ENCODE measurements at regions of chr15 and their contacts with region 1.

Region 1: DNA sequence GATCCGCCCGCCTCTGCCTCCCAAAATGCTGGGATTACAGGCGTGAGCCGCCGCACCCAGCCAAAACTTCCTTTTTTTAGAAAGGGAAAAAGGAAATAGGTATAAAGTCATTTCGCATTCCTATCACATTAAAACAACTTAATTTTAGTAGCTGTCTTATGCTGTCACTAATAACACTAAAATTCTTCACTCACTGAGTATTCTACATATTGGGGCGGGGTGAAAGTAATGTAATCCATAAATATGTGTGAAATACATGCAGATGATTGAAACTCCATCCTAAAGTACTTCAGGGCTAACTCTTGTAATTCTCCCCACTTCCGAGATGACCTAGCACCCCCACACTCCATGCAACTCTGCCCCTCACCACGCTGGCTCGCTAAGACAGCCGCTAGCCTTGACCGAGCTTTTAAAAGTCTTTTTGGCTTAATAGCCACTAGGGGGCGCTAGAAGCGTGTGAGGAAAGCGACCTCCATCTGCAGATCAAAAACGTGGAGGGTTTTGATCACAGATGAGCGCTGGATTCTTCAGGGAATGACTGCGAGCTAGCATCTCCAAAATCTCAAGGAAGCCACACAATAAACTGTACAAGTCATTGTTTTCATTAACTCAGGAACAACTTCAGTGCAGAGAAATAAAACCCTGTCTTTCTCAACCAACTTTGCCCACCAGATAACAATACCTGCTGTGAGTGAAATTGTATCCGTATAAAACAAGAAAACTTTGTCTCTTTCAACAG is 129.3 kb upstream of the IGF1R start:
- DNase-seq: peak; percentile 59
- H3K4me3 Mint-ChIP-seq: no peak overlapping the region
- H3K27ac Mint-ChIP-seq: no peak overlapping the region
- H3K4me1 Mint-ChIP-seq: peaks cover 6% of the 10 kb centered on the region
- H3K27me3 Mint-ChIP-seq: peaks cover 18% of the 10 kb centered on the region

Region 2: GRCh38 chr15:98321896-98322295 is 197.1 kb before region 1 on chr15:
- CTCF ChIA-PET with region 1: no interaction called
- DNase-seq: no peak
- H3K4me3 Mint-ChIP-seq: no peak overlapping the region
- H3K27ac Mint-ChIP-seq: no peak overlapping the region
- H3K4me1 Mint-ChIP-seq: no peaks in the 10 kb centered on the region
- H3K27me3 Mint-ChIP-seq: no peaks in the 10 kb centered on the region

Region 3: DNA sequence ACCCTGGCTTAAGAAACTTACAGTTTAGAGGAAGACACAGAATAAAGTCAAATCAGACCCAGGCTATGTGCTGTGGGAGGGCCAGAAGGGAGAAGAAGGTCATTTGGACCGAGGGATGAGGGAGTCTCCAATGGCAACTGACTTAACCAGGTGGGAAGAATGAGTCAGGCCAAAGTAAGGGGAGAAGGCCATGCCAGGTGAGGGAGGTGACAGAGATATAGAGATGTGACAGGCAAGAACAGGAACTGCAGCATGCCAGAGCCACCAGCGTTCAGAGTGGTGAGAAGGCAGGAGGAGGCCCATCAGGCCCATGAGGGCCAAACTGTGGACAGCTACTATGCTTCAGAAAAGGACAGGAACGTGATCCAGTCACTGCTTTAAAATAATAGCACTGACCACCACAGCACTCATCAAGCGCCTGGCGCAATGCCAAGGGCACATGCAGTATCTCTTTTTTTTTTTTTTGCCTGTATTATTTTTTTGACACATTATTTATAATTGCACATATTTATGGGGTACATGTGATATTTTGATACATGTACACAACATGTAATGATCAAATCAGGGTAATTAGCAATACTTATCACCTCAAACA is 25.0 kb before region 1 on chr15:
- CTCF ChIA-PET with region 1: no interaction called
- DNase-seq: no peak
- H3K4me3 Mint-ChIP-seq: no peak overlapping the region
- H3K27ac Mint-ChIP-seq: no peak overlapping the region
- H3K4me1 Mint-ChIP-seq: no peaks in the 10 kb centered on the region
- H3K27me3 Mint-ChIP-seq: no peaks in the 10 kb centered on the region

Region 4: GRCh38 chr15:98647774-98648653 is 129.0 kb after region 1 on chr15 and contains the start of gene IGF1R:
- CTCF ChIA-PET with region 1: interaction called, 64 read pairs
- DNase-seq: peak; percentile 87
- H3K4me3 Mint-ChIP-seq: peak within 1 kb of the TSS; percentile 85
- H3K27ac Mint-ChIP-seq: peak within 1 kb of the TSS; percentile 94
- H3K4me1 Mint-ChIP-seq: peaks cover 32% of the 10 kb centered on the region
- H3K27me3 Mint-ChIP-seq: peaks cover 40% of the 10 kb centered on the region

Region 5: DNA sequence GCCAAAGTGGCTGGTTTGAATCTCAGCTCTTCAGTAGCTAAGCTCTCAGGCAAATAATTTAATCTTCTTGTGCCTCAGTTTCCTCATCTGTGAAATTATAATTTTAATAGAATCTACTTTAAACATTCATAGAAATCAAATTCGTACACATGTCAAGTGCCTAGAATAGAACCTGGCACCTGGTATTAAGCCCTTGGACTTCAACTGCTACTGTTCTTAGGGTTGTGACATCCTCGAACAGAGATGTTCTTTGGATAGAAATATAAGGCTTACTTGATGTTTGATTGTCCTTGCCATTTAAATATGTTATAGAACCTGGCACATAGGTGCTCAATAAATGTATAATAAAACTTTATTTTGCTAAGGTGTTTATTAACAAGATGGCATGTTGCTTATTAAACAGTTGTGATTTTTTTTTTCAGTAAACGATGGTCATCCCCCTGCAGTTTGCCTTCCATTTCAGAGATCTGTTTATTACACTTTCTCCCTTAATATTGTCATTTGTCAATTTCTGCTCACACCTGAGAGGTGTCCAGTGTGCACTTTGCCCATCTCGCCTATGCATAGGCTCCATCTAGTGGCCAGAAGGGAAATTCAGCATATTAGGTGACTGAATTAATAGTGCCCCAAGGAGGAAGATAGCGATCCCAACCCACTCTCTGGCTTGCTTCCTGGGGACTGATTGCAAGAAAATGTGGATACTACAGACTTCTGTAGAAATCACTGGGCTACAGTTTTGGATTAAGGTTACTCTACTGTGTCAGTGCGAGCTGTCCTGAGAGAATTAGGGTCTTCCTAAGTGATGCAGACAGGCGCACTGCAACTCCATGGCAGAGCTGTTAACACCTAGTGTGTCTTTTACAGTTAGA is 140.1 kb after region 1 on chr15:
- CTCF ChIA-PET with region 1: interaction called, 88 read pairs
- DNase-seq: peak; percentile 49
- H3K4me3 Mint-ChIP-seq: no peak overlapping the region
- H3K27ac Mint-ChIP-seq: no peak overlapping the region
- H3K4me1 Mint-ChIP-seq: peaks cover 12% of the 10 kb centered on the region
- H3K27me3 Mint-ChIP-seq: peaks cover 4% of the 10 kb centered on the region

Region 6: DNA sequence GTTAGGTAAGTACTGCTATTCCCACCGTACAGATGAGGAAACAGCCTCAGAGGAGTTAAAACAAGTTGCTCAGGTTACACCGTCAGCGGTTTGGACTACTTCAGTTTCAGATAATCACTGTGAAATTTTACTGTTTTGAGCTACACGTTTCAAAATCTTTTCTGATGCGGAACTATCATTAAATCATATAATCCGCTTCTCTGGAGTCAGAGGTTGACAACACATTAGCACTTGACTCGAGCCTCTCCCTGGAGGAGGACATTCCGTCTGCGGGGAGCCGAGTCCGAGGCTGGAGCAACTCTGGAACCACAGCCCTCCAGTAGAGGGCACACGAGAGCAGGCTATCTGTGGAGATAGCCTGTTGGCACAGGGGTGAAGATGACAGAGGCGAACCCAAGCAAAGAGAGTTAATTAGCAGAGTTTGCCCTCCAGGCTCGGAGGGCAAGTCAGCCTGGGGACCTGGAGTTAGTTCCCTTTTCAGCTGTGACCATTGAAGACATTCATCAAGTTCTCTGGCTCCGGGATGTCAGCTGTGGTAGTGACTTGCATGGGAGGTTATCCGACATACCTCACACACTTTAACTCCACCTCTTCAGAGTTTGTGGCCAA is 260.6 kb after region 1 on chr15:
- CTCF ChIA-PET with region 1: interaction called, 16 read pairs
- DNase-seq: peak; percentile 80
- H3K4me3 Mint-ChIP-seq: no peak overlapping the region
- H3K27ac Mint-ChIP-seq: no peak overlapping the region
- H3K4me1 Mint-ChIP-seq: peaks cover 26% of the 10 kb centered on the region
- H3K27me3 Mint-ChIP-seq: peaks cover 5% of the 10 kb centered on the region

Region 7: GRCh38 chr15:98881526-98882520 is 362.8 kb after region 1 on chr15:
- CTCF ChIA-PET with region 1: interaction called, 14 read pairs
- DNase-seq: peak; percentile 27
- H3K4me3 Mint-ChIP-seq: no peak overlapping the region
- H3K27ac Mint-ChIP-seq: no peak overlapping the region
- H3K4me1 Mint-ChIP-seq: peaks cover 7% of the 10 kb centered on the region
- H3K27me3 Mint-ChIP-seq: no peaks in the 10 kb centered on the region

Region 8: DNA sequence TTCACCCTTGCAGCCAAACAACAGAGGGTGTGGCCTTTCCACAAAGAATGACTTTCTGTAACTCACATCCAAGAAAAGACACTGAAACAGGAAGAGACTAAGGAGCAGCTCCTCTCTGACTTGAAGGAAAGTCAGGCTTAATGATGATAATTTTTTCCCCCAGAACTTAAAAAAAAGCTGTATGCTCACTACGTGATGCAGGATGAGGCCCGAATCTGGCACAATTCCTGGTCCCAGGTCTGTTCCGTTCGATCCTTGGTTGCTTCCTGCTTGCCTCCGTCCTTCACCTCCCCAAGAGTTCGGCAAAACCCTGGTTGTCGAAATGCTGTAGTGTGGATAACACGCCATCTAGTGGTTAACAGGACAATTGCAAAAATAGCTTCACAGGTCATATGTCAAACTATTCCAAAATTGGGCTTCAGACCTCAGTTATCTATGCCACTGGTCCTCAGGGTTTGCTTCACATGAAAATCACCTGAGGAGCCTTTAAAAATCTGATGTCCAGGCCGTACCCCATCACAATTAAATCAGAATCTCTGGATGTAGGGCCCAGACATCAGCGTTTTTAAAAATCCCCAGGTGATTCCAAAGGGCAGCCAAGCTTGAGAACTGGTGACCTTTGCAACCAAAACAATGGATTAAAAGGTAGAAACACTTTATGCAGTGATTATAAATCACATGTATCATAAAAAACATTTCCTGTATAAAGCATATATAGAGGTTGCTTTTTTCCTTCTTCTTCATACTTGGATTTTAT is 557.7 kb after region 1 on chr15:
- CTCF ChIA-PET with region 1: interaction called, 12 read pairs
- DNase-seq: peak; percentile 50
- H3K4me3 Mint-ChIP-seq: peak overlapping the region; percentile 48
- H3K27ac Mint-ChIP-seq: no peak overlapping the region
- H3K4me1 Mint-ChIP-seq: peaks cover 7% of the 10 kb centered on the region
- H3K27me3 Mint-ChIP-seq: peaks cover 19% of the 10 kb centered on the region

Measured in activated naive CD4-positive, alpha-beta T cell treated with anti-CD3 and anti-CD28 coated beads, Interleukin-2, amount 10 ng/mL, durations not matched to agents 7 days and 5 days (primary cell).